Activated B cell treated with CpG ODN at 0.5 μM for 24 hours (primary cell): ENCODE measurements at regions of chr10 and their contacts with region 1.

Region 1: GRCh38 chr10:88473989-88474883 is 108.9 kb downstream of the RNLS start:
- DNase-seq: no peak
- ATAC-seq: no peak
- H3K4me3 Mint-ChIP-seq: no peak overlapping the region
- H3K27ac Mint-ChIP-seq: no peak overlapping the region
- H3K4me1 Mint-ChIP-seq: no peaks in the 10 kb centered on the region
- H3K27me3 Mint-ChIP-seq: no peaks in the 10 kb centered on the region
- CTCF ChIP-seq: no peak

Region 2: GRCh38 chr10:88108115-88108610 is 366.1 kb before region 1 on chr10:
- CTCF ChIA-PET with region 1: no interaction called
- POLR2A ChIA-PET with region 1: no interaction called
- intact Hi-C with region 1: no loop called
- DNase-seq: no peak
- ATAC-seq: peak; percentile 72
- H3K4me3 Mint-ChIP-seq: peak overlapping the region; percentile 55
- H3K27ac Mint-ChIP-seq: peak overlapping the region; percentile 95
- H3K4me1 Mint-ChIP-seq: peaks cover 58% of the 10 kb centered on the region
- H3K27me3 Mint-ChIP-seq: no peaks in the 10 kb centered on the region
- CTCF ChIP-seq: no peak

Region 3: GRCh38 chr10:88366772-88367171 is 107.5 kb before region 1 on chr10:
- CTCF ChIA-PET with region 1: no interaction called
- POLR2A ChIA-PET with region 1: interaction called, 10 read pairs
- intact Hi-C with region 1: no loop called
- DNase-seq: no peak
- ATAC-seq: no peak
- H3K4me3 Mint-ChIP-seq: no peak overlapping the region
- H3K27ac Mint-ChIP-seq: no peak overlapping the region
- H3K4me1 Mint-ChIP-seq: no peaks in the 10 kb centered on the region
- H3K27me3 Mint-ChIP-seq: no peaks in the 10 kb centered on the region
- CTCF ChIP-seq: no peak